Ascending aorta (tissue), 2 donors: ENCODE measurements at regions of chr3 and their contacts with region 1.

Region 1: DNA sequence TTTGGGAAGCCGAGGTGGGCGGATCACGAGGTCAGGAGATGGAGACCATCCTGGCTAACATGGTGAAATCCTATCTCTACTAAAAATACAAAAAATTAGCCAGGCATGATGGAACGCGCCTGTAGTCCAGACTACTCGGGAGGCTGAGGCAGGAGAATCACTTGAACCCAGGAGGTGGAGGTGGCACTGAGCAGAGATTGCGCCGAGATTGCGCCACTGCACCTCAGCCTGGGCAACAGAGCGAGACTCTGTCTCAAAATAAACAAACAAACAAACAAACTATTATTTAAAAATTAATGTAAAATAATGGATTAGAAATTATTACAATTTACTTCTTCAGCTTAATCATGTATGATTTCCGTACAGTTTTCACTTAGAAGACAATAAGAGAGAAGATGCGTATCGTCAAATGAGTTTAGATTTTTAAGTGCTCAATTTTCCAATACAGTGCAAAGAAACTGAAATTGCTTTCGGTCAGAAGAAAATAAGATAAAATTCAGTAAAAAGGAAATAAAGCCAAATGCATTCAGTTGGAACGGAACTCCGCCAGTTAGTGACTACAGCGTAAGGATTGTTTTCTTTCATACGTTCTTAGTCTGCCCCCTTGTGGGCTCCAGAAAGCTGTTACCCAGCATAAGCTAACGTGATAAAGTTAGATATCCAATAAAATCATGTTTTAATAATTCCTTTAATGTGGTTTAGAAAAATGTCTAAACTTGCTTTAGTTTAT is 24.8 kb downstream of the AADAC start:
- DNase-seq: peak in 1 of 2 donors; percentile 70
- H3K4me3 ChIP-seq: peak overlapping the region in 1 of 2 donors; percentile 41
- H3K27ac ChIP-seq: no peak overlapping the region
- H3K4me1 ChIP-seq: peaks cover 0 to 4% of the 10 kb centered on the region in 2 donors
- H3K27me3 ChIP-seq: no peaks in the 10 kb centered on the region
- CTCF ChIP-seq: peak; percentile 68 to 88 (median 78)

Region 2: DNA sequence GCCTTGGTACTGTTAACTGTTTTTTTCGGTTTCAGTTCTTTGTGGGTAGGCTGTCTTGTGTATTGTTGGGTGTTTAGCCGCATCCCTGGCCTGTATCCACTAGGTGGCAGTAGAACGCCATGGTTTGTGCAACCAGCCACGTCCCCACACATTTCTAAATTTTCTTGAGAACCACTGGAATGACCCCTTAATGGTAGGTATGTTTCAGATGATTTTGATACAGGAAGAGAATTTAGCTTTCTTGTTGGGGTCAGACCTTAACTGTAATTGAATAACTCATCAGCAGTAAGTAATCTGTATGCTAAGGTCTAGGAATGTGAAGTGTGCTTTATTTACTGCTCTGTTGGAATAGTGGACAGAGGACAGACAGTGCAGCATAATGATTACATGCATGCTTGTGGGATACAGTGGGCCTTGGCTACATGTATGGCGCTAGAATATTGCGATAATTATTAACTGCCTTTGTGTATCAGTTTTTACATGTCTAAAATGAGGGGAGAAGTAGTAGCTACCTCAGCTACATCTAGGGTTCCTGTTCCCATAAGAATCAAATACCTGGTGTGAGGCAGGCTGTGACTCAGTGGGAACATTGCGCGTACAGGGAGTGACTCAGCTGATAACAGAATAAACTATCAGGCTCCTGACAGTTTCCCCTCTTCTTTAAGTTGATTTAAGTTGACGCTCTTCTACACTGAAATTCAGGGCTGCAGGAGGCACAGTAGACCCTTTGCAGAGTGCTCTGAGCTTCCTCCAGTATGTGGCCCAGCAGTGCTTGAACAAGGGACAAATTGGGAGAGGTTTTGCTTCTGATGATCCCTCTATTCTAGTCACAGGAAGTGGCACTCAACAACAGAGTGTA is 610.7 kb before region 1 on chr3:
- intact Hi-C with region 1: loop called (anchors 5 kb)
- DNase-seq: peak; percentile 14 to 80
- H3K4me3 ChIP-seq: no peak overlapping the region
- H3K27ac ChIP-seq: peak overlapping the region in 1 of 2 donors; percentile 5
- H3K4me1 ChIP-seq: peaks cover 6 to 8% of the 10 kb centered on the region in 2 donors
- H3K27me3 ChIP-seq: no peaks in the 10 kb centered on the region
- CTCF ChIP-seq: peak; percentile 83 to 88 (median 86)

Region 3: GRCh38 chr3:151290673-151291072 is 548.1 kb before region 1 on chr3:
- intact Hi-C with region 1: loop called (anchors 5 kb)
- DNase-seq: no peak
- H3K4me3 ChIP-seq: no peak overlapping the region
- H3K27ac ChIP-seq: no peak overlapping the region
- H3K4me1 ChIP-seq: no peaks in the 10 kb centered on the region
- H3K27me3 ChIP-seq: no peaks in the 10 kb centered on the region
- CTCF ChIP-seq: peak; percentile 16 to 50 (median 28)

Region 4: DNA sequence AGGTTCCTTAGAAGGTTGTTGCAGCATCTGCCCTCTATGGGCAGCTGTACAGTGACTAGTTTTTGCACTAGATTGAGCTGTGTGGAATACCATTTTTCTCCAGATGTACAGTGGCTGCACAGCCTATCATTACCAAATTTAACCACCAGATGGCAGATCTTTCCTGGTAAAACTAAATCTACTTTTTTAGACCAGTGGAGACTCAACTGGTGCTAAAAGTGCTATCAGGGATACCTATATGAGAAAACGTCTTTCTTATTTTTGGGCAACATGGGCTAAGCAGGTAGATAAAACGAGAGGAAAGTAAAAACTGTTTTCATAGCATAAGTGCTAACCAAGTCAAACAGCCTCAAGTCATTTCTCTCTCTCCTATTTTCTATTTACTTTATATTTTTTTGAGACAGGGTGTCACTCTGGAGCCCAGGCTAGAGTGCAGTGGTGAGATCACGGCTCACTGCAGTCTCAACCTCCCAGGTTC is 399.1 kb before region 1 on chr3:
- intact Hi-C with region 1: loop called (anchors 1 kb)
- DNase-seq: no peak
- H3K4me3 ChIP-seq: no peak overlapping the region
- H3K27ac ChIP-seq: no peak overlapping the region
- H3K4me1 ChIP-seq: no peaks in the 10 kb centered on the region
- H3K27me3 ChIP-seq: no peaks in the 10 kb centered on the region
- CTCF ChIP-seq: peak; percentile 73 to 81 (median 79)